Endothelial cell of umbilical vein (primary cell): ENCODE measurements at regions of chr18 and their contacts with region 1.

Region 1: GRCh38 chr18:35713545-35713944 is 132.0 kb downstream of the GALNT1 start:
- DNase-seq: peak; percentile 92
- H3K4me3 ChIP-seq: no peak overlapping the region
- H3K27ac ChIP-seq: peak overlapping the region; percentile 96
- H3K4me1 ChIP-seq: peaks cover 76% of the 10 kb centered on the region
- H3K27me3 ChIP-seq: no peaks in the 10 kb centered on the region
- CTCF ChIP-seq: peak in 1 of 2 donors; percentile 9
- POLR2A ChIP-seq: peak; percentile 43

Region 2: GRCh38 chr18:35407871-35408481 is 305.6 kb before region 1 on chr18:
- CTCF ChIA-PET with region 1: no interaction called
- POLR2A ChIA-PET with region 1: no interaction called
- dilution Hi-C with region 1: no loop called
- intact Hi-C with region 1: loop called (anchors 5 kb)
- DNase-seq: peak; percentile 80
- H3K4me3 ChIP-seq: no peak overlapping the region
- H3K27ac ChIP-seq: peak overlapping the region; percentile 34
- H3K4me1 ChIP-seq: peaks cover 4% of the 10 kb centered on the region
- H3K27me3 ChIP-seq: no peaks in the 10 kb centered on the region
- CTCF ChIP-seq: peak; percentile 58 to 69
- POLR2A ChIP-seq: no peak

Region 3: DNA sequence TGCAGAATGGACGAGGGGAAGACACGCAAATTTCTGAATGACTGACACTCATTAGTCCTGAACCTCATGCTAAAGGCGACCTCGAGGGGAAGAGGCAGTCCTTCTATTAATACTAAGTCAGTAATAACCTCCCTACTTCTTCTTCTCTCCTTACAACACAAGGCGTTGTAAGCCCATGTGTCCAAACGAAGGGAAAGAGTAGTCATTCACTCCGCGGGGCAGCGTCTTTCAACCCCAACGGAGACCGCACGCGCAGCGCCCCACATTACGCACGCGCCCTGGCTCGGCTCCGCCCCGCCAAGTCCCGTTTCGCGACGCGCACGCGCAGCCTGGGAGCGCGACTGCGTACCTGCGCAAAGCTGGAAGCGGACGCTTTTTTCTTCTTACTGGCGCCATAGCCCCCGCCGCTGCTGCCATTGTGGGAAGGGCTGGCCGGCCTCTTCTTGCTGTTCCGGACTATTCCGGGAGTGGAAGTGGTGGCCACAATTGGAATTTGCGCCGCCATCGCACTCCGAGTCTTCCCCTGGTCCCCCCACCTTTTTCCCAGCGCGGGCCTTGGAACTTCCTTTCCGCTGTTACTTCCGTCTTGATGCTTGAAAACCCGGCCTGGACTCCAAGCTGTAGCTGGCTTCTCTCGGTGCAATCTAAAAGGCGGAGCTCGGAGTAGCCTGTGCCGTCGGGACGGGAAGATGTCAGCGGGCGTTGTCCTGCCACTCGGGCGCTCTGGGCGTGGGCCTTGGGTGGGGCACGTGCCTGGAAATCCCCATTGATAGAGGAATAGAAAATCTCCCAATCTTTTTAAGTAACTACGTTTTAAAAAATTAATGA is 216.0 kb before region 1 on chr18 and contains the start of gene INO80C:
- CTCF ChIA-PET with region 1: no interaction called
- POLR2A ChIA-PET with region 1: no interaction called
- dilution Hi-C with region 1: no loop called
- intact Hi-C with region 1: loop called (anchors 10 kb)
- DNase-seq: peak; percentile 96
- H3K4me3 ChIP-seq: peak within 1 kb of the TSS; percentile 60 to 89 (median 73)
- H3K27ac ChIP-seq: peak within 1 kb of the TSS; percentile 93
- H3K4me1 ChIP-seq: peaks cover 23% of the 10 kb centered on the region
- H3K27me3 ChIP-seq: no peaks in the 10 kb centered on the region
- CTCF ChIP-seq: no peak
- POLR2A ChIP-seq: peak; percentile 88
- total RNA-seq, gene INO80C: 51.4 and 56.0 TPM in 2 replicates

Region 4: DNA sequence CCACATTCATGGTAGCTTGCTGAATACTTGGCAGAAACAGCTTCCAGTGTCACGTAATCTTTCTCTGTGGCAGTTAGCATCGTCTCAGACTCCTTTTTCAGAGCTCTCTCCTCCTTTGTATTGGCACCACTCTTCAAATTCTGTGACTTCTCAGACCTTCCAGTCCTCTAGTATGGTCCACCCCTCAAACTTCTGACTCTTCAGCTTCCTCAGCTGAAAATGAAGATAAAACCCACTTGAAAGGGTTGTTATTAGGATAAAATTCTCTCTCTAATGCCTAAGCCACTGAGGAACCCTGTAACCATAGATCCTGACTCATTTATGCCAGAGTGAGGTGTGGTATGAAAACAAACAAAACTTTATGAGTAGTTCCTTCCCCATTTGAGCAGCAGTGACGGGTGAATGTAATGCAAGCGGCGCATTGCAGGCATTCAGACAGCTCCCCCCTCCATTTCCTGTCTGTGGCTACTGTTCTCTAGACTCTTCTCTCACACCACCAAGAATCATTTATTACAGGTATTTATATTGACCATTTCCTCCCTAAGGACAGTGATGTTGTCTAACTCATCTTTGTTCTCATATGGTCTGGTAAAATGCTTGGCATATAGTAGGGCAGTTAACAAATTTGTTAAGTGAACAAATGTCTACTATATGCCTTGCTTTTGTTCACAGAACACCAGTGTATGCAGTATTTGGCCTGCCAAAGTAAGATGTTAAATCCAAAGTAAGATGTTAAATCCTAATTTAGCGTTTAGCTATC is 96.7 kb before region 1 on chr18:
- CTCF ChIA-PET with region 1: no interaction called
- POLR2A ChIA-PET with region 1: no interaction called
- dilution Hi-C with region 1: no loop called
- intact Hi-C with region 1: loop called (anchors 1 kb)
- DNase-seq: peak; percentile 95
- H3K4me3 ChIP-seq: peak overlapping the region in 1 of 3 experiments; percentile 54
- H3K27ac ChIP-seq: peak overlapping the region; percentile 98
- H3K4me1 ChIP-seq: peaks cover 83% of the 10 kb centered on the region
- H3K27me3 ChIP-seq: no peaks in the 10 kb centered on the region
- CTCF ChIP-seq: no peak
- POLR2A ChIP-seq: peak; percentile 52

Region 5: DNA sequence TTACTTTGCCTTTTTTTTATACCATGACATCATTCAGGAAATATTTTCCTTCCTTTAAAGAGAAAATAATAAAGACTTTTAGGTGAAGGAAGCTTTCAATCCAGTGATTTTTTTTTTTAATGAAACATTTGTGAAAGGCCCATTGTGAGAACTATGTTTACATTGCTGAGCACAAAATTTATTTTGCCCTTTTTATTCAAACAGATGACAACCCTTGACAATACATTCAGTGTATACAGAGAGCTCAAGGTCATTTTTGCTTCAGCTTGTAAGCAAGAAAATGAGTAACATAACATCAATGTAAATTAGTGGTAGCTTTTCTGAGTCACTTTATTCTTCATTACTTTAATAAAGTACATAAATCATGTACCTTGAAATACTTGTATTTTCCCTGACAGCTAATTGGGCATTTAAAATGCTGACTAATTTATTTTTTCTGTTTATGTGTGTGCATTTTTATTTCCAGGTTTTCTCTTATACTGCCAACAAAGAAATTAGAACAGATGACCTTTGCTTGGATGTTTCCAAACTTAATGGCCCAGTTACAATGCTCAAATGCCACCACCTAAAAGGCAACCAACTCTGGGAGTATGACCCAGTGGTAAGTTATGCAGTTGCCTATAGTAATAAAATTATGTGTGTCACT is 10.4 kb before region 1 on chr18:
- CTCF ChIA-PET with region 1: interaction called, 7 read pairs
- POLR2A ChIA-PET with region 1: no interaction called
- dilution Hi-C with region 1: no loop called
- intact Hi-C with region 1: loop called (anchors 1 kb)
- DNase-seq: peak; percentile 92
- H3K4me3 ChIP-seq: no peak overlapping the region
- H3K27ac ChIP-seq: peak overlapping the region; percentile 87
- H3K4me1 ChIP-seq: peaks cover 47% of the 10 kb centered on the region
- H3K27me3 ChIP-seq: no peaks in the 10 kb centered on the region
- CTCF ChIP-seq: no peak
- POLR2A ChIP-seq: no peak

Region 6: GRCh38 chr18:35747894-35748472 is 34.4 kb after region 1 on chr18:
- CTCF ChIA-PET with region 1: no interaction called
- POLR2A ChIA-PET with region 1: no interaction called
- dilution Hi-C with region 1: no loop called
- intact Hi-C with region 1: no loop called
- DNase-seq: no peak
- H3K4me3 ChIP-seq: no peak overlapping the region
- H3K27ac ChIP-seq: no peak overlapping the region
- H3K4me1 ChIP-seq: no peaks in the 10 kb centered on the region
- H3K27me3 ChIP-seq: no peaks in the 10 kb centered on the region
- CTCF ChIP-seq: no peak
- POLR2A ChIP-seq: no peak

Region 7: GRCh38 chr18:36176710-36177109 is 463.2 kb after region 1 on chr18:
- CTCF ChIA-PET with region 1: no interaction called
- POLR2A ChIA-PET with region 1: no interaction called
- dilution Hi-C with region 1: no loop called
- intact Hi-C with region 1: loop called (anchors 2 kb)
- DNase-seq: peak; percentile 87
- H3K4me3 ChIP-seq: no peak overlapping the region
- H3K27ac ChIP-seq: peak overlapping the region; percentile 88
- H3K4me1 ChIP-seq: peaks cover 21% of the 10 kb centered on the region
- H3K27me3 ChIP-seq: no peaks in the 10 kb centered on the region
- CTCF ChIP-seq: no peak
- POLR2A ChIP-seq: peak; percentile 12